Heart left ventricle (tissue), 16 donors: ENCODE measurements at regions of chr2 and their contacts with region 1.

Region 1: GRCh38 chr2:215758691-215759090 is 254.7 kb downstream of the MREG start:
- DNase-seq: peak in 2 of 5 donors; percentile 24 to 39
- ATAC-seq: peak; percentile 60 to 85 (median 68)
- H3K4me3 ChIP-seq: no peak overlapping the region
- H3K27ac ChIP-seq: peak overlapping the region in 8 of 12 donors; percentile 19 to 59 (median 40)
- H3K4me1 ChIP-seq: peaks cover 0 to 19% (median 4%) of the 10 kb centered on the region in 12 donors
- H3K27me3 ChIP-seq: no peaks in the 10 kb centered on the region
- CTCF ChIP-seq: no peak
- POLR2A ChIP-seq: no peak

Region 2: DNA sequence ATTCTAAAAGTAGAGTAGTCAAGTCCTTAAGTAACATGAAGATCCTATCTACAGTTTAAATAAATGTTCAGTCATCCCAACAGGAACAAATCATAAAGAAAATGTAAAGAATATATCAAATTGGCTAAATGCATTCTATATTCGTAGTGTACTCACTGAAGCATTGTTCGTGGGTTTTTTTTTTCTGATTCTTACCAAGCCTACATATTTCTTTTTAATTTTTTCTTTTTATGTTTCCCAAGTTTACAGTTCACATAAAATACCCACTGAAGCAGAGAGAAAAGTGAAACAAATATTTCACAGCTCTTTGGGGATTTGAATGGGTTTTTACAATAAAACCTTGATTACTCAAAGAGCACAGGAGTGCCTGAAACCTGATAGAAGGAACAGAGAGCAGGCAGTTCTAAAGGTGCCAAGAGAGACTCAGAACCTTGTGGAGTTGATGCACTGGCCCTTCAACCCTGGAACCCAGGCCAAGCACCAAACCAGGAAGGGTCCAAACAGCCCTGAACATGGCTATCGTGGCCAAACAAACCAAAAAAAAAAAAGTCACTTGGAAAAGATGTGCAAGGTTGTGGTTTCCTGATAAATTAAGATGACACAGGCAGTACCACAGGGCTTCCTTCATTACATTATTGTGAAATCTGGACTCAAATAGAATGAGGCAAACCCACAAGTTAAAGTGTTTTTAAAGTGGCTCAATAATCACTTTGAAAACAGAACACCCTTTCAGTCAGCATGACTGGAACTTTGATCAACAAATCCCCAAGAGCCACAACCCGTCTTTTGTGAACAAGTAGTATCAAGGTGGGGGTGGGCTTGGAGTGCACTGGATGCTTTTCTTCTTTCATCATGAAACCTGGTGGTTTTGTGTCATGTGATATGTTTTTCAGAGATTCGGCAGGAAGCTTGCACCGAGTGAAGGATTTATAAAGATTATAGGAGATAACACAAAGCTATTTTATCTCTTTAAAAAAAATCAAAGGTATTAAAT is 77.8 kb before region 1 on chr2:
- intact Hi-C with region 1: no loop called
- DNase-seq: no peak
- ATAC-seq: peak in 2 of 4 donors; percentile 58 to 75
- H3K4me3 ChIP-seq: no peak overlapping the region
- H3K27ac ChIP-seq: no peak overlapping the region
- H3K4me1 ChIP-seq: peaks cover 0 to 31% (median 0%) of the 10 kb centered on the region in 12 donors
- H3K27me3 ChIP-seq: no peaks in the 10 kb centered on the region
- CTCF ChIP-seq: no peak
- POLR2A ChIP-seq: no peak

Region 3: DNA sequence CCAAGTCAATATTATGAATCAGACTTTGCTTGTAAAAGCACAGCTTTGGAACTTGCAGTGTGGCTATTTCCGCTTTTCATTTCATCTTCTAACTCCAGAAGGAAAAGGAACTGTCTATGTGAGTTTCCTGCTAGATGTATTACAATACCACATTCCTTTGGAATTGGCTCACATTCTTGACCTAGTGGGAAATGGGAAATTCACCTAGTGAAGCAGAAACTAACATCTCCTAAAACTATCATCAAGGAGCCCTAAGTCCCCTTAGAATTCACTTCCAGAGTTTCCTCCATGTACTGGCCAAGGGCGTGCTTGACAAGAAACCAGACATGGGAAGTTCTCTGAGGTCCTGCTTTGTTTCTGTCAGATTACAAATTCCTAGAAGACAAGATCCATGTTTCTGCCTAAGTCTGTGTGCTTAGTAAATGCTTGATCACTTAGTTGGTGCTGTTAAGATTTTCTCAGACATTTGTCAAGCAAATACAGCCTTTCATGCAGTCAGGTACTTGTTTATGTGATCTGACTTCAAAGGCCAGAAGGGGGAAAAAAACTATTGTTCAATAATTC is 47.1 kb before region 1 on chr2:
- intact Hi-C with region 1: loop called in 4 of 10 experiments (anchors 1 to 5 kb)
- DNase-seq: peak in 1 of 5 donors; percentile 16
- ATAC-seq: peak; percentile 45 to 85 (median 72)
- H3K4me3 ChIP-seq: no peak overlapping the region
- H3K27ac ChIP-seq: peak overlapping the region in 11 of 12 donors; percentile 0 to 76 (median 37)
- H3K4me1 ChIP-seq: peaks cover 0 to 36% (median 19%) of the 10 kb centered on the region in 12 donors
- H3K27me3 ChIP-seq: no peaks in the 10 kb centered on the region
- CTCF ChIP-seq: no peak
- POLR2A ChIP-seq: no peak

Region 4: DNA sequence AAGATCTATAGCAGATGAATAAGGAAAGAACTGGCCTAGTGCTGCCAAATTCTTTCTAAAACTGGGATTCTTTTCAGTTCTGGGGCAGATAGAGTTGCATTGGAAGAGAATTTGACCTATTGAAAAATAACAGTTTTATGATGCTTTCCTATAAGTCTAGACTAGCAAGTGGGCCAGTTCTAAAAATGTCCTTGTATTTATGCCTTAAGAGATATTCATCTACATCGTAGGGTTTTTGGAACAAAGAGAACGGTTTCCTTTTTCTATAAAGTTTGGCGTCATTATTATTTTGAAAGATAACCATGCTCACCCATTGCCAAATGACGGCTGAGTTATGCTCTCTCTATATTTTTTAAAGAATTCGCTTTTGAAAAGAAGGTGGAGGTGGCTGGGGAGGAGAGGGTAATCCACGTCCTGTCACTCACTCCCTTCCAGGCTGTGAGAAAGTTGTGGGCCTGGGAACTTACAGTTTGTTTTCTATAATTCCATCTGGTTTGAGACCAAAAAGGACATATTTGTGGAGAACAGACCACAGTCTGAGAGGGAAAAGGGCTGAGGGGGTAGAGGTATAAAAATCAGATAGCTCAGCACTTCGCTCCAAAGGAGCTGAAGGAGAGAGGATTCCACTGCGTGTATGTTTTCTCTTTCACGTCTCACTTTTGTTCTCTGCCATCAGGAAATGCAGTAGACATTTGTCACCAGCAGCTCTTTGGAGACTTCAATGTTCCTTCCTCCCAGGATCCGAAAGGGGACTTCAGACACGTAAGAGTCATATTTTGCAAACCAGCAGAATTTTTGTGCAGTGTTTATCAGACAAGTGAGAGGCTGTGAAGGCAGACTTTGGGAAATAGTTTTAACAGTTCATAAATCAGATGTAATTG is 41.0 kb before region 1 on chr2:
- intact Hi-C with region 1: loop called in 3 of 10 experiments (anchors 2 to 5 kb)
- DNase-seq: no peak
- ATAC-seq: peak in 2 of 4 donors; percentile 53 to 62
- H3K4me3 ChIP-seq: peak overlapping the region in 4 of 12 donors; percentile 1 to 14 (median 6)
- H3K27ac ChIP-seq: peak overlapping the region in 11 of 12 donors; percentile 21 to 74 (median 53)
- H3K4me1 ChIP-seq: peaks cover 0 to 40% (median 19%) of the 10 kb centered on the region in 12 donors
- H3K27me3 ChIP-seq: no peaks in the 10 kb centered on the region
- CTCF ChIP-seq: no peak
- POLR2A ChIP-seq: no peak